ENCODE measurements at regions of chr2 and their contacts with region 1.

Region 1: GRCh38 chr2:42568401-42569115 is at the start of gene MTA3:
- DNase-seq: peak; percentile 20
- ATAC-seq: peak; percentile 68
- H3K4me3 ChIP-seq: peak within 1 kb of the TSS; percentile 83
- H3K27ac ChIP-seq: peak within 1 kb of the TSS; percentile 27; the same call in 1 of the 2 replicates
- H3K4me1 ChIP-seq: peaks cover 28% of the 10 kb centered on the region
- H3K27me3 ChIP-seq: no peaks in the 10 kb centered on the region
- CTCF ChIP-seq: no peak
- total RNA-seq, gene MTA3: 27.3 and 27.6 TPM in 2 replicates

Region 2: GRCh38 chr2:42513257-42513918 is 55.2 kb before region 1 on chr2:
- CTCF ChIA-PET with region 1: no interaction called
- POLR2A ChIA-PET with region 1: no interaction called
- intact Hi-C with region 1: loop called (anchors 5 kb)
- DNase-seq: peak; percentile 78
- ATAC-seq: peak; percentile 43
- H3K4me3 ChIP-seq: no peak overlapping the region
- H3K27ac ChIP-seq: no peak overlapping the region
- H3K4me1 ChIP-seq: no peaks in the 10 kb centered on the region
- H3K27me3 ChIP-seq: no peaks in the 10 kb centered on the region
- CTCF ChIP-seq: peak; percentile 80